GM12878 (cell line): ENCODE measurements at regions of chr3 and their contacts with region 1.

Region 1: DNA sequence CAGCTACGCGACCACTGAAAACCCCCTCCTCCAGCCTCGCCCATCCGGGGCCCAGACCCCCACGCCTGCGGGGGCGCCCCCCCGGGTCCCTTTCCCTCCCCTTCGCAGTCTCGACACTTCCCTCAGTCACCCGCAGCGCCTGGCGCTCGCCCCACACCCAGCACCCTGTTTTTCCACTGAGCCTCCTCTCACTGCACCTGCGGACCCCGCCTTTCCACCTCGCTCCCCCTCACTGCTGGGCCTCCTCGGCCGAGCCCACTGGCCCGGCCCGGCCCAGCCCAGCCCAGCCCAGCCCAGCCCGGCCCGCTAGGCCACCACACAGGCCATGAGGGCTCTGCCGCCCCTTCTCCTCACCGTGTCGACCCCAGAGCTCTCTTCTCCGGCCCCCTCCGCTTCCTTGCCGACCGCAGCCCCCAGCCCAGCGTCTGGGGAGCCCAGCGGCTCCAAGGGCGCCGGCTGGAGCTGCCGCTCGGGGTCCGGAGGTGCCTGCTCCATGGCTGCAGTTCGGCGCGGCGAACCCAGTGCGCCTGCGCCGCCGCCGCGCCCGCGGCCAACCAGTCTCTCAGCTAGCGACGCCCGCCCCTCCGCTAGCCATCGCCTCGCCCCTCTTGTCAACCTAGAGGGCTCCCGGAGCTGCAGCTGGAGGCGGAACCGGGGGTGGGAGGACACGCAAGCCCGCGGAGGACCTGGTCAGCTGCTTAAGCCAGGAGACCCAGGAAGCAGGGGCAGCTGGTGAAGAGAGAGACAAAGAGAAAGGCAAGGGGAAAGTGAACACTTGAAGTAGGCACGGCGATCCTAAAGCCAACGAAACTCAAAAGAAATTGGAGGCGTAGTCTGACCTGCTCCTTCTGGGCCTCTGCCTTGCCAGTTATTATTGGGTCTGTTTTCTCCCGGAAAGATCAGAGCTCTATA is at the start of gene SNX4:
- DNase-seq: peak; percentile 63
- ATAC-seq: peak; percentile 93
- H3K4me3 ChIP-seq: peak within 1 kb of the TSS; percentile 99
- H3K27ac ChIP-seq: peak within 1 kb of the TSS; percentile 82
- H3K4me1 ChIP-seq: peaks cover 15% of the 10 kb centered on the region
- H3K27me3 ChIP-seq: no peaks in the 10 kb centered on the region
- CTCF ChIP-seq: no peak
- EP300 ChIP-seq: no peak
- POLR2A ChIP-seq: peak; percentile 92
- RAD21 ChIP-seq: no peak
- polyA plus RNA-seq, gene SNX4: 33.4 to 42.0 TPM

Region 2: GRCh38 chr3:125418306-125418705 is 101.6 kb before region 1 on chr3:
- CTCF ChIA-PET with region 1: no interaction called
- POLR2A ChIA-PET with region 1: no interaction called
- RAD21 ChIA-PET with region 1: no interaction called
- SMC1A ChIA-PET with region 1: no interaction called
- in situ Hi-C with region 1: no loop called
- intact Hi-C with region 1: no loop called
- DNase-seq: no peak
- ATAC-seq: no peak
- H3K4me3 ChIP-seq: no peak overlapping the region
- H3K27ac ChIP-seq: no peak overlapping the region
- H3K4me1 ChIP-seq: peaks cover 4% of the 10 kb centered on the region; the same call in 1 of the 2 replicates
- H3K27me3 ChIP-seq: no peaks in the 10 kb centered on the region
- CTCF ChIP-seq: no peak
- EP300 ChIP-seq: no peak
- POLR2A ChIP-seq: no peak
- RAD21 ChIP-seq: no peak

Region 3: DNA sequence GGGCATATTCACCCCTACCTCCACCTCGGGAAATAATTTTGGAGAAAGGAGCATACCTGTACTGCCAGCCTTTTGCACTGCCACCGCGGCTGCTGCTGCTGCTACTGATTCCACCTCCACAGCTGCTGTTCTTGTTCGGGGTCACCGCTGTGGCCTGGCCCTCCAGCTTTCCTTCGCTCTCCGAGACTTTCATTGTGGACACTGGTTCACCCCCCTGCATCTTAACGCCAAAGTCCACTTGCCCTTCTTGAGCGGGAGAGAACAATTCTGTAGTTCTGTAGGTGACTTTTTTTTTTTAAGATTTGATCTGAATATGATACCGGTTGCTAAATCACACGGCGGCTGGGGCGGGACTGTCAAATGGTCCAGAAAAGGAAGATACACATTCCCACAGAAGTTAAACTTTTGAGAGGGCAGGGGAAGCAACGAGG is 74.7 kb after region 1 on chr3:
- CTCF ChIA-PET with region 1: interaction called, 8 read pairs
- POLR2A ChIA-PET with region 1: interaction called, 9 read pairs
- RAD21 ChIA-PET with region 1: interaction called, 13 read pairs
- SMC1A ChIA-PET with region 1: interaction called, 8 read pairs
- in situ Hi-C with region 1: no loop called
- intact Hi-C with region 1: no loop called
- DNase-seq: no peak
- ATAC-seq: 0 out of 3 replicates have a peak, but pooled peaks have one; percentile 2
- H3K4me3 ChIP-seq: peak overlapping the region; percentile 96
- H3K27ac ChIP-seq: peak overlapping the region; percentile 79
- H3K4me1 ChIP-seq: peaks cover 4% of the 10 kb centered on the region; the same call in 1 of the 2 replicates
- H3K27me3 ChIP-seq: no peaks in the 10 kb centered on the region
- CTCF ChIP-seq: no peak
- EP300 ChIP-seq: no peak
- POLR2A ChIP-seq: no peak
- RAD21 ChIP-seq: no peak

Region 4: GRCh38 chr3:125644036-125645010 is 124.4 kb after region 1 on chr3:
- CTCF ChIA-PET with region 1: no interaction called
- POLR2A ChIA-PET with region 1: no interaction called
- RAD21 ChIA-PET with region 1: no interaction called
- SMC1A ChIA-PET with region 1: no interaction called
- in situ Hi-C with region 1: no loop called
- intact Hi-C with region 1: no loop called
- DNase-seq: no peak
- ATAC-seq: no peak
- H3K4me3 ChIP-seq: no peak overlapping the region
- H3K27ac ChIP-seq: no peak overlapping the region
- H3K4me1 ChIP-seq: no peaks in the 10 kb centered on the region
- H3K27me3 ChIP-seq: no peaks in the 10 kb centered on the region; a peak in 1 of 4 replicates
- CTCF ChIP-seq: no peak
- EP300 ChIP-seq: no peak
- POLR2A ChIP-seq: no peak
- RAD21 ChIP-seq: no peak

Region 5: DNA sequence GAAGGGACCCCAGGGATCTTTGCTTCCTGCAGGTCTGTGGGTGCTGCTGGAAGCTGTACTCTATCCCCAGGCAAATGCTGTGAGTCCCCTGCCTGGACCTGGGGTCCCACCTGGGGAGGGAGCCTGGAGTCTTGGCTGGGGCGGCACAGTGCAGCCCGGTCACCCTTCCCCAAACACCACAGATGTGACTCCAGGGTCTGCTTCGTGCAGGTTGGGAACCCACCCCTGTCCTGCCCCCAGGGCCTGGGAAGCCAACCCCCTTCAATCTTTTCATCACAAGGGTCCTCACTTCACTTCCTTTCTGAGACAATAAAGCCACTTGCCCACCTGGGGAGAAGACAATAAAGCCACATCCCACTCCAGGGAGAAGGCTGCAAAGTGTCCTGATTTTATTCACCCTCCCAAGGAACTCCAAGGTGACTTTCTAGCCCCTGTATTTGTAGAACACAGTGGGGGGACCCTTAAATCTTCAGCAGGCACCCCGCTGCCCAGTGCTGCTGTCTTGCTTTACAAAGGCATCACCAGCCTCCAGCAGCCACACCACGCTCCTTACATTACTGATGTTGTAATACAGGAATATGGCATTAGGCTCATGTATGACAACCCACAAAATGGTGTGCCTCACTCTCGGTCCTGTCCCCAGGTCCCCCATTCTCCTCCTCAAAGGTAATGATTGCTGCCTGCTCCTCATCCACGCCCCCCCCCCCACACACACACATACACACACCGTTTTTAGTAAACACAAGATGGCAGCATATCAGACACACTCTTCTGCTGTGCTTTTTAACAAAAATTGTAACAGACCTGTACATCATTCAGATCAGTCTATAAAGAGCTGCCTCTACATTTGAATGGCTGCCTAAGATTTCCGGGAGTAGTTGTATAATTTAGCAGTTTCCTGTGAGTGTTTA is 1028.9 kb after region 1 on chr3:
- CTCF ChIA-PET with region 1: no interaction called
- POLR2A ChIA-PET with region 1: no interaction called
- RAD21 ChIA-PET with region 1: no interaction called
- SMC1A ChIA-PET with region 1: no interaction called
- in situ Hi-C with region 1: no loop called
- intact Hi-C with region 1: no loop called
- DNase-seq: no peak
- ATAC-seq: no peak
- H3K4me3 ChIP-seq: no peak overlapping the region
- H3K27ac ChIP-seq: no peak overlapping the region
- H3K4me1 ChIP-seq: no peaks in the 10 kb centered on the region
- H3K27me3 ChIP-seq: peaks cover 3 to 10% of the 10 kb centered on the region in 2 experiments; a peak in 3 of 4 replicates
- CTCF ChIP-seq: no peak
- EP300 ChIP-seq: no peak
- POLR2A ChIP-seq: no peak
- RAD21 ChIP-seq: no peak